Right lobe of liver (tissue), 6 donors: ENCODE measurements at regions of chr4 and their contacts with region 1.

Region 1: DNA sequence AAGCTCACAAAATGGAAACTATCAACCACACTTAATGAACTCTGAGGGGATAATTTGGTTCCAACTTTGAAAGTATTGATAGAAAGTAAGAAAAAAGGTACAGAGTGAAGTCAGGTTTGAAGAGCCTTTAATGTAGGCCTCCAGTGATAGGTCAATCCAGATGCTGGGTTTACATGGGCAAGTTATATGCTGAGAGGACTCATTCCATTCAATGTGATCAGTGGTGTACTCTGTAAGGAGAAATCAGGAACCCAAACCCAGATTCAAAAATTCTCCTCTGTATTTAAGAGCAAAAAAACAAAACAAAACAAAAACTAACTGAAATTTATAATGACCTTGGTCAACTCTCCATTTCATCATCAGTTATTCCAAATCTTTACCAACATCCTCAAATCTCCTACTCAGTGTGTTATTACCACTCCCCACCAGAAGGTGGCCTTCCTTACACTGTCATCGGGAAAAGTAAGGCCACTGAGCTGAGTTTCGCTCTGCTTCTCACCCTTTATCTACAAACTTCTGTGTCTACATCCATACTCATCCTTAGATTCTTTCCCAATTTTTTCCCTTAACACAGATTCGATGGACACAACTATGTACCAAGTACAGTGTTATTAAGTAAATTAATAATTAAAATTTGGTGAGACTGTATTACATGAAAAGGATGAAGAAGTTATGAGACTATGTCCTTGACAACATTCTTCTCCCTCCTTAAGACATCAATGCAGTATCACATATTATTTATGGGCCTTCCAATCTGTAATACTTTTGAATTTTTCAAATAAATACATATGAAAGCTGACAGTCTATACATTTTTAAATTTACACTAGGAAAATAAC is 88.3 kb downstream of the ZAR1 start:
- DNase-seq: peak in 1 of 3 donors; percentile 63
- ATAC-seq: peak; percentile 98 to 100 (median 99)
- H3K4me3 ChIP-seq: no peak overlapping the region
- H3K27ac ChIP-seq: no peak overlapping the region
- H3K4me1 ChIP-seq: no peaks in the 10 kb centered on the region
- H3K27me3 ChIP-seq: no peaks in the 10 kb centered on the region
- CTCF ChIP-seq: peak; percentile 81 to 95 (median 82)
- POLR2A ChIP-seq: no peak

Region 2: GRCh38 chr4:48766131-48766792 is 187.9 kb after region 1 on chr4:
- intact Hi-C with region 1: no loop called
- DNase-seq: no peak
- ATAC-seq: no peak
- H3K4me3 ChIP-seq: no peak overlapping the region
- H3K27ac ChIP-seq: no peak overlapping the region
- H3K4me1 ChIP-seq: no peaks in the 10 kb centered on the region
- H3K27me3 ChIP-seq: no peaks in the 10 kb centered on the region
- CTCF ChIP-seq: no peak
- POLR2A ChIP-seq: no peak

Region 3: GRCh38 chr4:48963042-48963679 is 384.8 kb after region 1 on chr4:
- intact Hi-C with region 1: loop called in 1 of 2 experiments (anchors 10 kb)
- DNase-seq: peak; percentile 49 to 70 (median 58)
- ATAC-seq: peak; percentile 99 to 100 (median 99)
- H3K4me3 ChIP-seq: no peak overlapping the region
- H3K27ac ChIP-seq: no peak overlapping the region
- H3K4me1 ChIP-seq: no peaks in the 10 kb centered on the region
- H3K27me3 ChIP-seq: no peaks in the 10 kb centered on the region
- CTCF ChIP-seq: peak; percentile 97 to 99 (median 98)
- POLR2A ChIP-seq: no peak